MCF 10A (cell line): ENCODE measurements at regions of chr12 and their contacts with region 1.

Region 1: GRCh38 chr12:124767066-124767821 is 96.4 kb downstream of the SCARB1 start:
- DNase-seq: peak; percentile 65
- H3K4me3 Mint-ChIP-seq: no peak overlapping the region
- H3K27ac Mint-ChIP-seq: no peak overlapping the region
- H3K4me1 Mint-ChIP-seq: peaks cover 18% of the 10 kb centered on the region
- H3K27me3 Mint-ChIP-seq: no peaks in the 10 kb centered on the region
- CTCF ChIP-seq: peak; percentile 98

Region 2: DNA sequence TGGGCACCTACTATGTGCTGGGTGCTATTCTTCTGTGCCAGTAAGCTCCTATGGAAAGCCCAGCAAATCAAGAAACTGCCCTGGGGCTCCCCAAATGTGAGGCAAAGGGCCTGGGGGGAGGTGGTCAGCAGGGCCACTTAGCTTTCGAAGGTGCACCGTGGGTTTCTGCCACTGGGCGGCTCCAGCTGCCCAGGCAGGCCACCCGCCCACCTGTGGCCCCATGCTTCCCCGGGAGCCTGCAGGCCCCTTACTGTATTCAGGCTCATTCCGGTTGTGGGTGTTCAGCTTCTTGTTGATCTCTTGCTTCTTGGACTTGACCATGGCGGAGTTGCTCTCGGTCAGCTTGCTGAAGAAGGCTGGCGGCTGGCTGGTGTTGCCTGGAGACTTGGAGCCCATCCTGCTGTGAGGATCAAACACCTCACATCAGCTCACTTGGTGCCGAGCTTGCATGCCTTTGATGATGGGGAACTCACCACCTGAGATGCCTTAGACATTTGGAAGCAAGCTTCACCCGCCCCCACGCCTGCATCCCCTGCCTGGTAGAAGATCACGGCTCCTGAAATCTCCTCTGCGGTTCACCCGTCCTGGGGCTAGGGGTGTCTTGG is 435.1 kb before region 1 on chr12:
- CTCF ChIA-PET with region 1: interaction called, 4 read pairs
- POLR2A ChIA-PET with region 1: no interaction called
- intact Hi-C with region 1: loop called (anchors 5 kb)
- DNase-seq: no peak
- H3K4me3 Mint-ChIP-seq: no peak overlapping the region
- H3K27ac Mint-ChIP-seq: no peak overlapping the region
- H3K4me1 Mint-ChIP-seq: no peaks in the 10 kb centered on the region
- H3K27me3 Mint-ChIP-seq: no peaks in the 10 kb centered on the region
- CTCF ChIP-seq: peak; percentile 25

Region 3: DNA sequence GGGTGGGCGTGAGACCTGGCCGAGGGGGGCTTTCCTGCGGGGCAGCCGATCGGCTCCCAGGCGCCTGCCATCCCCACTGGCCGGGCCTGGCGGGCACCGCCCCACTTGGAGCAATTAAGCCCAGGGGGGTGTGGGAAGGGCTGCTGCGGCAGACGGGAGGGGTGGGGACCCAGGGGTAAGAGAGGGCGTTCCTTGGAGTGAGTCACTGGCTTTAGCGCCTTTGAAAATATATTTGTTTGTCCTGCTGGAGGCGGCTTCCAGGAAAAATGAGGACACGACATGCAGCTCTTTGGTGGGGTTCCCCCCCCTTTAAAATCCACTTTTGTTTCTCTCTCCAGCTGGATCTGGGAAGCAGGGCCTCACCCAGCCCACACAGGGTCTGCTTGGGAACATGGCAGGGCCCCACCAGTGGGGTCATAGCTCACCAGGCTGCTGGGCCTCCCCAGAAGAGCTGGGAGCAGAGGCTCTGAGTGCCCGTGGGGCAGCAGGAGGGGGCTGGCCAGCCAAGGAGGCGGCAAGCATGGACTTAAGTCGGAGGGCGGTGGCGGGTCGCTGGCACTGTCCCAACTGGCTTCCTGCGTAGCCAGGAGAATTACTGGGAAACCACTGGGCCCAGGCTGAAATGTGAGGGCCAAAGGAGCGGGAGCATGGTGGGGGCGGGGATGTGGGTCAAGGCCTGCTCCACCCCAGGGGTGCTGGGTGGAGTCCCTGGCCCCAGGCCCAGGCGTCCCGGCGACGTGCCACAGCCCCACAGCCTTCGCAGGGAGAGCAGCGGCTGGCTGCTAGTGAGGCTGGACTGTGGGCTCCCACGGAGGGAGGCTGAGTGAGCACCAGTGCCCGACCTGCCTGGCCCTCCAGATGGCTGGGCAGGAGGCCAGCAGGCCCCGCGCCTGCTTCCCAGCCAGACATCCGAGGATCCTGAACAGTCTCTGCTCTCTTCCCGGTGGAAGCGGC is 344.4 kb before region 1 on chr12:
- CTCF ChIA-PET with region 1: interaction called, 6 read pairs
- POLR2A ChIA-PET with region 1: no interaction called
- intact Hi-C with region 1: loop called (anchors 5 kb)
- DNase-seq: peak; percentile 92
- H3K4me3 Mint-ChIP-seq: peak overlapping the region; percentile 48
- H3K27ac Mint-ChIP-seq: peak overlapping the region; percentile 49
- H3K4me1 Mint-ChIP-seq: peaks cover 18% of the 10 kb centered on the region
- H3K27me3 Mint-ChIP-seq: no peaks in the 10 kb centered on the region
- CTCF ChIP-seq: no peak

Region 4: DNA sequence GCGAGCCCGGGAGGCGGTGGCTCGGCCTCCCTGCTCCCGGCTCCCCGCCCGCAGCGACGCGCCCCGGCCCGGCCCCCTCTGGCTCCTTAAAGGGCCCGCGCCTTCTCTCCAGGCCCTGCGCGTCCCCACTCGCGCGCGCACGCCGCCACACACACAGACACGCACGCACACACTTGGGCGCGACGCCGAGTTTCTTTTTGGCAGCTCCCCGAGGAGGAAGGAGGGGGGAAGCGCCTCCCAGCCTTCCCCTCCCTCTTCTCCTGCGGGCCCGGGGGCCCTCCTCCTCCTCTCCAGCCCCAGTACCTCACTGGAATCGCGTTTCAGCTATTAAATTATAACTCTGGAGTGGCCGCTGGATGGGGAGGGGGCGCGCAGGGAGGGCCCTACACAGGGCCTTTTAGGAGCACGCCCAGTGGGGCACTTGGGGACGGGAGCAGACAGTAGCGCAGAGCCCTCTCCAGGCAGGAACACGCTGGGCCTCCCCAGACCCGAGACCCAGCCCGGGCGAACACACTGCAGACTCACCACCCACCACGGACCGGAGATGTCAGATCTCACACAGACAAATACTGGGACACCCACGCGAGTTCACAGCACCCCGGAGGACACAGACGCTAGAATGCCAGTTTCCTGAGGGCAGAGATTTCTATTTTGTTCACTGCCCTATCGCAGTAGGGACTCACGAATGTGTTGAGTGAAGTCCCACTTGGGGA is 199.4 kb before region 1 on chr12:
- CTCF ChIA-PET with region 1: interaction called, 16 read pairs
- POLR2A ChIA-PET with region 1: interaction called, 3 read pairs
- intact Hi-C with region 1: loop called (anchors 1 kb)
- DNase-seq: peak; percentile 79
- H3K4me3 Mint-ChIP-seq: peak overlapping the region; percentile 72
- H3K27ac Mint-ChIP-seq: no peak overlapping the region
- H3K4me1 Mint-ChIP-seq: peaks cover 6% of the 10 kb centered on the region
- H3K27me3 Mint-ChIP-seq: no peaks in the 10 kb centered on the region
- CTCF ChIP-seq: no peak

Region 5: DNA sequence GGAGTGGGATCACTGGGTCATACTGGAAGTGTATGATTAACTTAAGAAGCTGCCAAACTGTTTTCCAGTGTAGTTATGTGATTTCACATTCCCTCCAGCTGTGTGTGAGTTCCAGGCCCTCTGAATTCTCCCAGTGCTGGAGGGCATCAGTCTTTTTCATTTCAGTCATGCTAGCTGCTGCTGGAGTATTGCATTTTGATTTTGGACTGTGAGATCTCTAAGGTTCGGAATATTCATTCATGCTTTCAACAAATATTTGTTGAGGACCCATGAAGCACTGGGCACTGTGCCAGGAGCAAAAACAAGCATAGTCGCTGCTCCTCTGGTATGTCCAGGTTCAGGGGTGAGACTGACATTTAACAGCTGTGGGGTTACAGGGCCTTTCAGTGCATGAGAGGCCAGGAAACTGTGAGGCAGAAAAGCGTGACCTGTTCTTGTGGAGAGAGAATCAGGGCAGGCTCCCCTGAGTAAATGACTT is 36.8 kb before region 1 on chr12:
- CTCF ChIA-PET with region 1: interaction called, 16 read pairs
- POLR2A ChIA-PET with region 1: no interaction called
- intact Hi-C with region 1: no loop called
- DNase-seq: no peak
- H3K4me3 Mint-ChIP-seq: no peak overlapping the region
- H3K27ac Mint-ChIP-seq: no peak overlapping the region
- H3K4me1 Mint-ChIP-seq: no peaks in the 10 kb centered on the region
- H3K27me3 Mint-ChIP-seq: no peaks in the 10 kb centered on the region
- CTCF ChIP-seq: no peak

Region 6: DNA sequence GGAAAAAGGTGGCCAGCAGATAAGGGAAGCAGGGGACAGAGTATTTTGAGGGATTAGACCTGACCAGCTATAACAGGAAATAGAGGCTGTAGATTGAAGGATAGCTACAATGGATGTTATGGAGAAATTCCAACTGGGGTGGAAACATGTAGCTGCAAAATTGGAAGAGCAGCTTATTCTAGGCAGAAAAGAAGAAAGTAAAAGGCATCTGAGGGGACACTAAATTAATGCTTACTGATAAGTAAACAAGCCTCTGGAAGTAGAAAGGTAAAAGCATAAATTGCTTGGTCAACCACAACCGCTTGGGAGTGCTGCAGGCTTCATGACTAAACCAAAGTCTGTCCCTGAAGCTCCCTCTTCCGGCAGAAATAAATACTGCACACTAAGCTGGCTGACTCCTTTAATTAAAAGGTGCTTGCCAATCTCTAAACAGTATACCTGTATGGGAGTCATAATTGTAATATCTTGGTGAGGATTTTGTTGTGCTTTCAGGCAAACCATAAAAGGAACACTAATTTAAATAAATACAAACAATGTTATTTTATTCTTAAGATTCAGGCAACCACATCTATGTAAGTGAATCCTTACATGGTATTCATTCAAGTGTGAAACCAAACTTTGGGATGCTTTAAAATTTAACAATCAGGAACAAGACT is 139.5 kb after region 1 on chr12:
- CTCF ChIA-PET with region 1: interaction called, 10 read pairs
- POLR2A ChIA-PET with region 1: no interaction called
- intact Hi-C with region 1: no loop called
- DNase-seq: peak; percentile 95
- H3K4me3 Mint-ChIP-seq: peak overlapping the region; percentile 28
- H3K27ac Mint-ChIP-seq: peak overlapping the region; percentile 16
- H3K4me1 Mint-ChIP-seq: peaks cover 45% of the 10 kb centered on the region
- H3K27me3 Mint-ChIP-seq: no peaks in the 10 kb centered on the region
- CTCF ChIP-seq: peak; percentile 97